CD8-positive, alpha-beta T cell (primary cell): ENCODE measurements at regions of chr12 and their contacts with region 1.

Region 1: DNA sequence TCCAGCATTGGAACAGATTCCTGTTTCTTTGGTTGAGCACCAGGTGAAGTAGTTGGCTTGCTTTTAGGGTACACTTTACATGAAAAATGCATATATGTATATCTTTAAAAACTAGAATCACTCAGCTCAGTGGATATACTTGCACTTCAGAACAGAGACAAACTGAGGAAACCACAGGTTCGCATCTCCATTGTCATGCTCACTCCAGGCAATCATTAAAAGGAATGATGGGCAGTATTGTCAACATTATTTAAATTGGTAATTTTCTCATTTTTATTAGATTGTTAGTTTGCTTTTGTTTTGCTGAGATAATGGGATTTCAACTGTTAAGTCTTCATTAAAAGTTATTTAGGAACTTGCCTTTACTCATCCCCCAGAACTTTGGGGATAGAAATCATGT is 71.0 kb upstream of the NELL2 start:
- DNase-seq: no peak
- ATAC-seq: no peak
- H3K4me3 ChIP-seq: no peak overlapping the region
- H3K4me3 Mint-ChIP-seq: no peak overlapping the region
- H3K27ac ChIP-seq: no peak overlapping the region
- H3K27ac Mint-ChIP-seq: no peak overlapping the region
- H3K4me1 ChIP-seq: no peaks in the 10 kb centered on the region
- H3K4me1 Mint-ChIP-seq: peaks cover 3% of the 10 kb centered on the region
- H3K27me3 ChIP-seq: peaks cover 0 to 2% of the 10 kb centered on the region in 2 experiments
- H3K27me3 Mint-ChIP-seq: peaks cover 8% of the 10 kb centered on the region
- CTCF ChIP-seq: no peak

Region 2: DNA sequence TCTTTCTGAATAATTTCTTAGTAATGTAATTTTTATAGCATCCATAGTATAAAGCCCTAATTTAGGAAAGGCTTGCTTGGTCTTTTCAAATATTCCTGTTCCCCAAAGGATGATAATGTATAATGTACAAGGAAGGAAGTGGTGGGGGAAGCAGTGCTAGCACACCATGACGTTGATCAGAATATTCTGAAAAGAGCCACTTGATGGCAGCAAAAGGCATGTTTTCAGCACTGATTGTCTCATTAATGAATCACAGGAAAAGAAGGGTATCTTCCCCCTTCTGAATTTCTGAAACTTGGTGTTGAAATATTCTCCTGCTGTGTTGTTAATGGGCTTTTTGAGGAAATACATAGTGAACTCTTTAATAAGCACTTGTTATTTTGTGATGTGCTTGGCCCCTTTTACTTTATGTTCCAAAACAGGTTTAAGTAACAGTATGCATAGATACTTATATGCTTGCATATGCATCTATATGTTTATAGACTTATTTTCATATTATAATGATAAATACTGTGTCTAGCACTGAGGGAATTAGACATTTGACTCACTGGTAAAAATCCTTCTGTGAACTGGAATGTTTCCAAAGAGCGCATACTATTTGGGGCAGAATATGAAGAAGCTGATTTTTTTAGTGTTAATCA is 989.3 kb before region 1 on chr12:
- CTCF ChIA-PET with region 1: no interaction called
- POLR2A ChIA-PET with region 1: no interaction called
- intact Hi-C with region 1: loop called (anchors 5 kb)
- DNase-seq: peak in 2 of 9 experiments; percentile 30 to 45
- ATAC-seq: no peak
- H3K4me3 ChIP-seq: no peak overlapping the region
- H3K4me3 Mint-ChIP-seq: no peak overlapping the region
- H3K27ac ChIP-seq: no peak overlapping the region
- H3K27ac Mint-ChIP-seq: no peak overlapping the region
- H3K4me1 ChIP-seq: no peaks in the 10 kb centered on the region
- H3K4me1 Mint-ChIP-seq: peaks cover 6% of the 10 kb centered on the region
- H3K27me3 ChIP-seq: no peaks in the 10 kb centered on the region
- H3K27me3 Mint-ChIP-seq: no peaks in the 10 kb centered on the region
- CTCF ChIP-seq: no peak

Region 3: DNA sequence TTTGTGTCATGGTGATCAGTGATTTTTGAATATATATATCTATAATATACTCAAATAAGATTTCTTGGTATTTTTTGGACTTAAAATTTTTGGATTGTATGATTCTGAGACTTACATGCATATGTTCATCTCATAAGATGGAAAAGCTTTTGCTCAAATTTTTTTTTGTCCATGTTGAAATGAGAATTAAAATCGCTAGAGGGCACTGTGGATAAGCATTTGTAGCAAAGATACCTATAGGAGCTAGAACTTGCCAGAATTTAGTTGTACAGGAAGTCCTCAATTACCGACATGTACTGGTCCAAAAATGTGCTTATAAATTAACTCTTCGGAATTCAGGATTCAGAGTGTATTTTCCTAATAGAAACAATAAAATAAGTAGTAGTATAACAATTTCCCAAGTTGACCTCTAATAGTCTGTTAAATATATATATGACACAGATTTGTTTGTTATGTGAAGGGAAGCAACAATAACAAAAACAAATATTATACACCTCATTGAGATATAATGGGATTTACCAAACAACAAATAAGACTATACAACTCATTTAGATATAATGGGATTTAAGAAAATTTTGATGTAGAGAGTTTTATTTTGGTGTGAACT is 931.7 kb before region 1 on chr12:
- CTCF ChIA-PET with region 1: interaction called, 10 read pairs
- POLR2A ChIA-PET with region 1: no interaction called
- intact Hi-C with region 1: loop called (anchors 1 to 2 kb)
- DNase-seq: peak in 2 of 9 experiments; percentile 48 to 65
- ATAC-seq: peak; percentile 52
- H3K4me3 ChIP-seq: no peak overlapping the region
- H3K4me3 Mint-ChIP-seq: no peak overlapping the region
- H3K27ac ChIP-seq: no peak overlapping the region
- H3K27ac Mint-ChIP-seq: no peak overlapping the region
- H3K4me1 ChIP-seq: no peaks in the 10 kb centered on the region
- H3K4me1 Mint-ChIP-seq: peaks cover 2% of the 10 kb centered on the region
- H3K27me3 ChIP-seq: no peaks in the 10 kb centered on the region
- H3K27me3 Mint-ChIP-seq: no peaks in the 10 kb centered on the region
- CTCF ChIP-seq: peak; percentile 71

Region 4: GRCh38 chr12:44960856-44961255 is 13.7 kb after region 1 on chr12:
- CTCF ChIA-PET with region 1: interaction called, 29 read pairs
- POLR2A ChIA-PET with region 1: no interaction called
- intact Hi-C with region 1: no loop called
- DNase-seq: no peak
- ATAC-seq: no peak
- H3K4me3 ChIP-seq: no peak overlapping the region
- H3K4me3 Mint-ChIP-seq: no peak overlapping the region
- H3K27ac ChIP-seq: no peak overlapping the region
- H3K27ac Mint-ChIP-seq: no peak overlapping the region
- H3K4me1 ChIP-seq: no peaks in the 10 kb centered on the region
- H3K4me1 Mint-ChIP-seq: no peaks in the 10 kb centered on the region
- H3K27me3 ChIP-seq: no peaks in the 10 kb centered on the region
- H3K27me3 Mint-ChIP-seq: no peaks in the 10 kb centered on the region
- CTCF ChIP-seq: no peak

Region 5: GRCh38 chr12:44972746-44973421 is 25.7 kb after region 1 on chr12:
- CTCF ChIA-PET with region 1: interaction called, 10 read pairs
- POLR2A ChIA-PET with region 1: no interaction called
- intact Hi-C with region 1: no loop called
- DNase-seq: no peak
- ATAC-seq: no peak
- H3K4me3 ChIP-seq: no peak overlapping the region
- H3K4me3 Mint-ChIP-seq: no peak overlapping the region
- H3K27ac ChIP-seq: no peak overlapping the region
- H3K27ac Mint-ChIP-seq: no peak overlapping the region
- H3K4me1 ChIP-seq: peaks cover 11% of the 10 kb centered on the region
- H3K4me1 Mint-ChIP-seq: peaks cover 7% of the 10 kb centered on the region
- H3K27me3 ChIP-seq: no peaks in the 10 kb centered on the region
- H3K27me3 Mint-ChIP-seq: no peaks in the 10 kb centered on the region
- CTCF ChIP-seq: no peak